Activated CD4-positive, alpha-beta memory T cell treated with anti-CD3 and anti-CD28 coated beads for 36 hours (primary cell): ENCODE measurements at regions of chr14 and their contacts with region 1.

Region 1: DNA sequence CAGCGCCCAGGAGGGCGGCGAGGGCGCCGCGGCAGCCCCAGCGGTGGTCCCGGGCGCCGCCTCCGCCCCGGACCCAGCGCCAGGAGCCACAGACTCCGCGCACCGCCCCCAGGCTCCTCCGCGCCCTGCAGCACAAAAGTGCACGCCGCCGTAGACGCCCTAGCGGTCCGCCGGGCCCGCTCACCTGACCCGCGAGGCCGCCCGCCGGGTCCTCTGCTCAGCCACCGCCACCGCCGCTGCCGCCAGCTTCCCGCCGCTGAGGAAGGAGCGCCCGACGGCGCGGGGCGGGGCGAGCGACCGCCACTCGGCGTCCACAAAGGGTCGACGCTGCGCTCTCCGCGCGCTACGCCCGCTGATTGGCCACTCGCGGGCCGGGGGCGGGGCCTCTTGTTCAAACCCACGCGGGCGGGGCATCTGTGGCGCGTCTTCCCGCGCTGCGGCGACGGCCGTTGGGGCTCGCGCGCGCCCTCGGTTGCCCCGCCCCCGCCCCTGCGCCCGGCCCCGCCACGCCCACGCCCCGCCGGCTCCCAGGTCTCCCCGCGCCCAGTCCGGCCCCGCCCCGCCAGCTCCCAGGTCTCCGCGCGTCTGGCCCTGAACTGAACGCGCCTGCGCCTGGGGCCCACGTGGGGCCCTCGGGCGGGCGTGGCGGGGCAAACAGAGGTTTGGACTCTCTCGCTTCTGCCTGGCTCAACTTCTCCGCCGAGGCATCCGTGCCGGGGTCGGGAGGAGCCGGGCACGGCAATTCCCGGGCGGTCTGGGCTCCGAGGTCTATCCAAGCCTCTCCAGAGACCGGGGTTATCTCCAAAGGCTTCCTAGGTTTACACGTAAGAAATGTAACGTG is at the start of gene CDCA4:
- DNase-seq: peak; percentile 98
- H3K4me3 Mint-ChIP-seq: peak within 1 kb of the TSS; percentile 93
- H3K27ac Mint-ChIP-seq: peak within 1 kb of the TSS; percentile 88
- H3K4me1 Mint-ChIP-seq: peaks cover 70% of the 10 kb centered on the region
- H3K27me3 Mint-ChIP-seq: no peaks in the 10 kb centered on the region
- total RNA-seq, gene CDCA4: 63.4 to 69.1 TPM

Region 2: DNA sequence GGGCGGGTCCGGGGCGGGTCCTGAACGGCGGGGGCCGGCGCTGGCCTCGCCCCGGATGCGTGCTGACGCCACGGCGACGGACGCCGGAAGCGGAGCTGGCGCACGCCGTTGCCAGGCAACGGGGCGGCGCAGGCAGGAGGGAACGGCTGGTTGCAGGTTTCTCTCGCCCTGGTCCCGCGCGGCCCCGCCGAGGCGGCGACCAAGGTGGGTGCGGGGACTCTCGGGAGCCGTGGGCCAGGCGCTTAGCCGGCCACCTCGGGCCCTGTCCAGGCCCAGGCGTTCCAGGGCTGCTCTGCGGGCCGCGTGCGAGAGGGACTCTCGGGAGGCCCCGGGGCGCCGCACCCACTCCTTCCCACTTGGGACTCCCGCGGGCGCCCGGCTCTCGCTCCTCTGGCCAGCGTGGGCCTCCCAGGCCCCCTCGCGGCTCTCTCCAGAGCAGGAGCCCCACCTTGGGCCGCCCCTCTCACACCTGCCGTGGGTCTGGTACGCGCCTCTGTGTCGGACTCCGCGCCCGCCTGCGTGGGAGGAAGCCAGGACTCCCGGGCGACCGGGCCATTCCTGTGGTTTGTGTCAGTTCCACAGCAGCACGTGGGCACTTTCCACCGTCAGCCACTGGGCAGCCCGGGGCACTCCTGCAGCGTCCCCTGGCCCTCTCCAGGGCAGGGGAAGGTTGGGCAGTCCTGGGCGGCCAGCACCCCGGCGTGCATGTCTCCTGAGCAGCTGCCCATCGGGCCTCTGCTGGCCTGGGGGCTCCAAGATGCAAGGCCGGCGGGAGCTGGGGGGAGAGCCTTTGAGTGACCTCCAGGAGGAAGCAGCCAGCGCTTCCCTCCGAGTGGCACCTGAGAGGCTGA is 35.1 kb before region 1 on chr14 and contains the start of gene CLBA1:
- CTCF ChIA-PET with region 1: interaction called, 5 read pairs
- POLR2A ChIA-PET with region 1: interaction called, 18 read pairs
- intact Hi-C with region 1: no loop called
- DNase-seq: peak; percentile 91
- H3K4me3 Mint-ChIP-seq: peak within 1 kb of the TSS; percentile 59
- H3K27ac Mint-ChIP-seq: no peak within 1 kb of the TSS
- H3K4me1 Mint-ChIP-seq: peaks cover 9% of the 10 kb centered on the region
- H3K27me3 Mint-ChIP-seq: peaks cover 2% of the 10 kb centered on the region
- total RNA-seq, gene CLBA1: 0.78 to 1.2 TPM

Region 3: DNA sequence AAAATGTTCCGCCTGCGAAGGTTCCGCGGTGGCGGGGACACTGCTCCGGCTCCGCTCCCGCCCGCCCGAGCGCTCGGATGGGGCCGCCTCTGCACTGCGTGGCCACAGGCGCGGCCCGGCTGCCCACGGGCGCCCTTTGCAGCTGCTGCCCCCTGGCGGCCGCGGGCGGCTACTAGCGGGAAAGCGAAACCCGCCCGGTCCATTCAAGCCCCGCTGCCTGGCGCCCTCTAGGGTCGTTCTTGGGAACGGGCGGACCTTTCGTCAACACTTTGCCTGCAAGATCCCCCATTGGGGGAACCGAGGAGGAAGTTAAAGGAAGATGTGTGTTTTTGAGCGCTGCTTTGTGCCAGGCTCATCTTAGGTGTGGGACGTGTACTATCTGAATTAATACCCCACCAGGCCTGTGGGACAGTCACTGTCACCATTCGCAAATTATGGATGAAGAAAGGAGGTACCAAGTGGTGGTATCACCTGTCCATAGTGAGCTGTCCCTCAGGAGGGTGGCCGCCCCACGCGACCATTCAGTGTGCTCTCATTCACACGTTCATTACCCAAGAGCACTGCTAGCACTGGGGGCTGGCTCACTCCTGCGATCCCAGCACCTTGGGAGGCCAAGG is 24.8 kb after region 1 on chr14:
- CTCF ChIA-PET with region 1: interaction called, 75 read pairs
- POLR2A ChIA-PET with region 1: interaction called, 6 read pairs
- intact Hi-C with region 1: loop called (anchors 1 kb)
- DNase-seq: peak; percentile 94
- H3K4me3 Mint-ChIP-seq: no peak overlapping the region
- H3K27ac Mint-ChIP-seq: peak overlapping the region; percentile 23
- H3K4me1 Mint-ChIP-seq: peaks cover 15% of the 10 kb centered on the region
- H3K27me3 Mint-ChIP-seq: peaks cover 9% of the 10 kb centered on the region

Region 4: DNA sequence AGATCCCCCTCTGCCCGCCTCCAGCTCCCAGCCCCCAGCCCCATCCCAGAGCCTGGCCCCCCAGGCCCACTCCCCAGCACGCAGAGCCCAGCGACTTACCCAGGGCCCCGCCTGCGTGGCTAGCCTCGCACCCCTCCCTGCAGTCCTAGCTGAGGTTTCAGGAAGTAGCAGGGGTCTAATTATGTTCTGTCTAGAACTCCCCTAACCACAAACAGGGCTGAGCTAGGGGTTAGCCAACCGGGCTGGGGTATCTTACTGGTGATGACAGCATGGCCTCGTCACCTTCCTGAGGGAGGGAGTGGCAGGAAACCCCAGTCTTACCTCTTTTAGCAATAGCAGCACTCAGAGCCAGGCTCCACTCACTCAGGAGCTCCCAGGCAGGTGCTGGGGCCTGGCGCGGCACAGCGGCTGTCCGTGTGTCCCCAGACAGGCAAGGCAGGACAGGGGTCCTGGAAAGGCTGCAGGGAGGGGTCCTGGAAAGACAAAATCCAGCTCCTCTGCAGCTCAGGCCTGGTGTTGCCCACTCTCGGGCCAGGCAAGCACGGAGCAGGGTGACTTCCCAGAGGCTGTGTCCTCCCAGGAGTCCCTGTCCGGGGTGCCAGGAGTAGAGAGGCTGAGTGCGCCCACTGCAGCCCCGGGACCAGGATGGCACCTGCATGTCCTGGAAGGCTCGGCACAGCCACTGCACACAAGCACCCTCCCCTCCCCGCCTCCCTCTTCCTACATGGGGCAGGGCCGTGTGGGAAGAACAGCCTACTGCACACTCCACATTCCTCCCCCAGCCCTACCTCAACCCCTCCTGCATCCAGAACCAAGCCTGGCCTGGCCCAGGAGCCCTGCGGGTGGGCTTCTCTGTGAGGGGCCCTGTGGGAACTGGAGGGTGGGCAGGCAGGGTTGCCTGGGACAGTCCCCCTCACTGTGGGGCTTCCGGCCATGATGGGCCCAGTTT is 44.5 kb after region 1 on chr14 and contains the start of gene GPR132:
- CTCF ChIA-PET with region 1: interaction called, 3 read pairs
- POLR2A ChIA-PET with region 1: interaction called, 16 read pairs
- intact Hi-C with region 1: loop called (anchors 1 kb)
- DNase-seq: peak; percentile 95
- H3K4me3 Mint-ChIP-seq: peak within 1 kb of the TSS; percentile 94
- H3K27ac Mint-ChIP-seq: peak within 1 kb of the TSS; percentile 86
- H3K4me1 Mint-ChIP-seq: peaks cover 70% of the 10 kb centered on the region
- H3K27me3 Mint-ChIP-seq: no peaks in the 10 kb centered on the region
- total RNA-seq, gene GPR132: 33.4 to 34.2 TPM